Calu3 (cell line): ENCODE measurements at regions of chr10 and their contacts with region 1.

Region 1: GRCh38 chr10:48414778-48415177 is 108.3 kb downstream of the MAPK8 start:
- DNase-seq: no peak
- H3K4me3 Mint-ChIP-seq: no peak overlapping the region
- H3K27ac Mint-ChIP-seq: no peak overlapping the region
- H3K4me1 Mint-ChIP-seq: peaks cover 14% of the 10 kb centered on the region
- H3K27me3 Mint-ChIP-seq: no peaks in the 10 kb centered on the region
- CTCF ChIP-seq: no peak

Region 2: DNA sequence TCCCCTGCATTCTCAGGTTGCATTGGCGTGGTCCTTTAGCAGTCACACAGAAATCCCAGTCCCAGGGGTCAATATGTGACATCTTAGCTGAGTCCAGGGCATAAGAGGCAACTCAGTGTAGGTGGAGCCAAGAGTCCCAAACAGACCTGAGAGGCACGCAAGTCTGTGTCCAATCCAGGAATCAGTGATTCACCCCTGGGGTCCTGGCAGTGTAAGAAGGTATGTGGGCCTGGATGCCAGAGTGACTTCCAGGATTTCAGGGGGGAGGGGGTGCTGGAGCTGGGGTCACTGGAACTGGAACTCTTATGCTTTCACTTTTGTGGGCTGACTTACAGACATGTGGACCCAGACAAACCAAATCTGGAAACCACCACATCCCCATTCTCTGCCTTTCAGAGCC is 167.1 kb before region 1 on chr10:
- CTCF ChIA-PET with region 1: no interaction called
- intact Hi-C with region 1: no loop called
- DNase-seq: no peak
- H3K4me3 Mint-ChIP-seq: no peak overlapping the region
- H3K27ac Mint-ChIP-seq: no peak overlapping the region
- H3K4me1 Mint-ChIP-seq: peaks cover 31% of the 10 kb centered on the region
- H3K27me3 Mint-ChIP-seq: peaks cover 32% of the 10 kb centered on the region
- CTCF ChIP-seq: no peak

Region 3: GRCh38 chr10:48317321-48317990 is 97.3 kb before region 1 on chr10:
- CTCF ChIA-PET with region 1: interaction called, 10 read pairs
- intact Hi-C with region 1: no loop called
- DNase-seq: no peak
- H3K4me3 Mint-ChIP-seq: no peak overlapping the region
- H3K27ac Mint-ChIP-seq: no peak overlapping the region
- H3K4me1 Mint-ChIP-seq: peaks cover 10% of the 10 kb centered on the region
- H3K27me3 Mint-ChIP-seq: no peaks in the 10 kb centered on the region
- CTCF ChIP-seq: no peak

Region 4: DNA sequence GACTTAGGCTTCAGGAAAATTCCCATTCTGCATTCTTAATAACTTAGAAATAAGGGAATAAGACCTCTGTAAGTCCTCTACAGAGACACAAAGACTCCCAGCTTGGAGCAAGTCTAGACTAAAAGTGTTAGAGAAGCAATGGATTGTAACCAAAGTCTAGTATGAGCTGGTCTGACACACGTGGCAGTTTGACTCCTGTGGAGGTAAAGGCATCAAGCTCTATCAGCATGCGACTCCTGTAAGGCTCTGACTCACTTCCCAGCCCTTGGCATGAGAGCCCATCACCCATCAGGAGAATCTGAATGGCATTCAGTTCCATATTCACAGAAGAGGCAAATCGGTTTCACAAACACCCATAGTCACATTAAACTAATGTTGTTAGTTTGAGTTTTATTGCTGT is 705.0 kb after region 1 on chr10:
- CTCF ChIA-PET with region 1: no interaction called
- intact Hi-C with region 1: no loop called
- DNase-seq: no peak
- H3K4me3 Mint-ChIP-seq: no peak overlapping the region
- H3K27ac Mint-ChIP-seq: no peak overlapping the region
- H3K4me1 Mint-ChIP-seq: no peaks in the 10 kb centered on the region
- H3K27me3 Mint-ChIP-seq: peaks cover 66% of the 10 kb centered on the region
- CTCF ChIP-seq: no peak

Region 5: DNA sequence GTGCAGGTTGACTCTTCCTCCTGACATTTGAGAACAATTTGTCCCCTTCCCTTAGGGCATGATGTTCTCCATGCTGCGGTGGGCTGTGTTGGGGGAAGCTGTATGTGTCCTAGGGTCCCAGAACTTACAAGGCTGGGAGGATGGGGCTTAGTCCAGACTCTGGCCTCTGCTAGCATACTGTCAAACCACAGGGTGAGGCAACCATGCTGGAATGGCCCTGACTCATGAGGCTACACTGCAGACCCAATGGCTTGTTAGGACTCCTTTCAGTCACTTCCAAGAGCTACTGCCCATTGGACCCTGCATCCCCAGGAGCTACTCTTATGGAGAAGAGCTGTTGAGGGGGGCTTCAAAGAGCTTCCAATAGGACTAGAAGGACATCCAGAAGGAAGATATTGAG is 739.2 kb after region 1 on chr10:
- CTCF ChIA-PET with region 1: no interaction called
- intact Hi-C with region 1: no loop called
- DNase-seq: no peak
- H3K4me3 Mint-ChIP-seq: no peak overlapping the region
- H3K27ac Mint-ChIP-seq: no peak overlapping the region
- H3K4me1 Mint-ChIP-seq: no peaks in the 10 kb centered on the region
- H3K27me3 Mint-ChIP-seq: peaks cover 91% of the 10 kb centered on the region
- CTCF ChIP-seq: no peak